Activated CD4-positive, alpha-beta memory T cell treated with anti-CD3 and anti-CD28 coated beads for 36 hours (primary cell): ENCODE measurements at regions of chr17 and their contacts with region 1.

Region 1: GRCh38 chr17:36534840-36535668 is at the starts of genes MYO19 and PIGW:
- DNase-seq: peak; percentile 91
- H3K4me3 Mint-ChIP-seq: peak within 1 kb of the TSS; percentile 97
- H3K27ac Mint-ChIP-seq: peak within 1 kb of the TSS; percentile 95
- H3K4me1 Mint-ChIP-seq: peaks cover 43% of the 10 kb centered on the region
- H3K27me3 Mint-ChIP-seq: no peaks in the 10 kb centered on the region
- total RNA-seq, gene MYO19: 106 to 112 TPM
- total RNA-seq, gene PIGW: 11.8 to 12.3 TPM

Region 2: DNA sequence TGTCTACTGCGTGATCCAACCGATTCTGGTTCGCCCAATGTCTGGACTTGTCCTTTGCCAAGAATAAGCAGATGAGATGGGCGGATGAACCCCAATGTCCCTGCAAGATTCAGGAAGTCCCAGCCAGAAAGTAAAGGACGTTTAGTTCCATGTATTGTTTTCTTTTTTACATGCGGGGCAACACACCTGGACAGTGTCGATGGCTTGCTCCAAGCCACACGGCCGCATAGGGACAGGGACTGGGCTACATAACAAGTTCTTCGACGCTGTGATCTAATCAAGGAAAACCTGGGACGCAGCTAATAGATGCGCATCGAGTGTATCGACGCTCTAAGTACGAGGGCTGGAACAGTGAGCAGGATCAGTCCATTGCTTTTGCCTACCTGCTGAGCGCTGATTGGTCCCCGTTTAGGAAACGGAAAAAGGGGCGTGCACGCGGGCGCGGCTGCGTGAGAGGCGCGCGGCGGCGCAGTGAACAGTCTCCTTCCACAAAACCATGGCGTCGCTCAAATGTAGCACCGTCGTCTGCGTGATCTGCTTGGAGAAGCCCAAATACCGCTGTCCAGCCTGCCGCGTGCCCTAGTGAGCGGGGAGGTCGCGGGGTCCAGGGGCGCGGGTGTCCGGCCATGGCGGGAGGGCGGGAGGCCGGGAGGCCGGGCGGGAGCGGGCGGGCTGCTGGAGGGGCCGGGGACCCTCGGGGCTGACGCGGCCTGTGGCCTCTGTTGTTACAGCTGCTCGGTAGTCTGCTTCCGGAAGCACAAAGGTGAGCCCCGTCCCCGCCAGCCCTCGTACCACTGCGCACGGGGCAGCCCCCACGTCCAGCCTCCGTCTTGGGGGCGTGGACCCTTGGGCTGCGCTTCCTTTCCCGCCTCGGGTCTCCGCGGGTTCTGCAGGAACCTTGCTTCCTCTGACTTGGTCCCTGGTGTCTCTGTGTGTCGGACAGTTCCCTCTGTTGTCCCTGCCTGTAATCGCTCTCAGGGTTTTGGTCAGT is 48.6 kb before region 1 on chr17 and contains the start of gene ZNHIT3:
- CTCF ChIA-PET with region 1: interaction called, 4 read pairs
- POLR2A ChIA-PET with region 1: interaction called, 5 read pairs
- intact Hi-C with region 1: loop called (anchors 2 kb)
- DNase-seq: peak; percentile 96
- H3K4me3 Mint-ChIP-seq: peak within 1 kb of the TSS; percentile 94
- H3K27ac Mint-ChIP-seq: peak within 1 kb of the TSS; percentile 93
- H3K4me1 Mint-ChIP-seq: peaks cover 48% of the 10 kb centered on the region
- H3K27me3 Mint-ChIP-seq: peaks cover 13% of the 10 kb centered on the region
- total RNA-seq, gene ZNHIT3: 41.6 to 45.2 TPM

Region 3: DNA sequence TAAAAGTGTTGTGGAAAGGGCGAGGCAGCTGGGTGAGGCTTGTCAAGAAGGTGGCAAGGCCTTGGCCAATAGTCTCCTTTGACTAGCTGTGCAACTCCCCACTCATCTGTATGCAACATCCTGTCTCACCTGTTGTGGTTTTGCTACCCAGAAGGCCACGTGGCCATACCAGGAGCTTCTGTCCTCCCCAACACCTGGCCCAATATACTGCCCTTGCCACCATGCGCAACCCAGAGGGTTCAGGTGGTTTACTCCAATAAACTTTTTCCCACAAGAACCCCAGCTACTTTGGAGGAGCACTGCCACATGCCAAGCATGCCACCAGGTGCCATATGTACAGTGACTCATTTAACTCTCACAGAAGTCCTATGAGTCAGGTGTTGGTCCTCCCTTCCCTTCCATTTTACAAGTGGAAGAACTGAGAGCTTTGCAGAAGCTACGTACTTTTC is 10.6 kb before region 1 on chr17:
- CTCF ChIA-PET with region 1: interaction called, 16 read pairs
- POLR2A ChIA-PET with region 1: interaction called, 21 read pairs
- intact Hi-C with region 1: no loop called
- DNase-seq: peak; percentile 27
- H3K4me3 Mint-ChIP-seq: no peak overlapping the region
- H3K27ac Mint-ChIP-seq: peak overlapping the region; percentile 78
- H3K4me1 Mint-ChIP-seq: peaks cover 28% of the 10 kb centered on the region
- H3K27me3 Mint-ChIP-seq: no peaks in the 10 kb centered on the region

Region 4: GRCh38 chr17:36545465-36546417 is 10.7 kb after region 1 on chr17:
- CTCF ChIA-PET with region 1: interaction called, 19 read pairs
- POLR2A ChIA-PET with region 1: interaction called, 59 read pairs
- intact Hi-C with region 1: loop called (anchors 1 kb)
- DNase-seq: peak; percentile 98
- H3K4me3 Mint-ChIP-seq: peak overlapping the region; percentile 90
- H3K27ac Mint-ChIP-seq: peak overlapping the region; percentile 98
- H3K4me1 Mint-ChIP-seq: peaks cover 40% of the 10 kb centered on the region
- H3K27me3 Mint-ChIP-seq: no peaks in the 10 kb centered on the region

Region 5: DNA sequence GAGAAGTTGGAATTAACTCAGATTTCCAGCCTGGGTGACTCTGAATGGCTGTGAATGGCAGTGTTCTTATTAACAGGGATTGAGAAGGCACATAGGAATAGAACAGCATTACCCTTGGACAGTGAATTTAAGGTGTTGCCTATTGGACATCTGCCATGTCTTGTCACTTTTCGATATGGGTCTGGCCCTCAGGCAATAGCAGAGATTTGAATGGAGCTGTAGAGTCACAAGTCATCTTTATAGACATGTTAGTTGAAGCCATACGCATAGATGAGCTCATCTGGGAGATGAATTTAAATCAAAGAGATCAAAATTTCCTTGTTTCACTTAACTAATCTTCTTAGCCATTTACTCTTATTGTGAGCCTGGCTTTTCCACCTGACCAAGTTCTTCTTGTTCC is 41.7 kb after region 1 on chr17:
- CTCF ChIA-PET with region 1: no interaction called
- POLR2A ChIA-PET with region 1: no interaction called
- intact Hi-C with region 1: no loop called
- DNase-seq: no peak
- H3K4me3 Mint-ChIP-seq: no peak overlapping the region
- H3K27ac Mint-ChIP-seq: no peak overlapping the region
- H3K4me1 Mint-ChIP-seq: peaks cover 7% of the 10 kb centered on the region
- H3K27me3 Mint-ChIP-seq: no peaks in the 10 kb centered on the region

Region 6: DNA sequence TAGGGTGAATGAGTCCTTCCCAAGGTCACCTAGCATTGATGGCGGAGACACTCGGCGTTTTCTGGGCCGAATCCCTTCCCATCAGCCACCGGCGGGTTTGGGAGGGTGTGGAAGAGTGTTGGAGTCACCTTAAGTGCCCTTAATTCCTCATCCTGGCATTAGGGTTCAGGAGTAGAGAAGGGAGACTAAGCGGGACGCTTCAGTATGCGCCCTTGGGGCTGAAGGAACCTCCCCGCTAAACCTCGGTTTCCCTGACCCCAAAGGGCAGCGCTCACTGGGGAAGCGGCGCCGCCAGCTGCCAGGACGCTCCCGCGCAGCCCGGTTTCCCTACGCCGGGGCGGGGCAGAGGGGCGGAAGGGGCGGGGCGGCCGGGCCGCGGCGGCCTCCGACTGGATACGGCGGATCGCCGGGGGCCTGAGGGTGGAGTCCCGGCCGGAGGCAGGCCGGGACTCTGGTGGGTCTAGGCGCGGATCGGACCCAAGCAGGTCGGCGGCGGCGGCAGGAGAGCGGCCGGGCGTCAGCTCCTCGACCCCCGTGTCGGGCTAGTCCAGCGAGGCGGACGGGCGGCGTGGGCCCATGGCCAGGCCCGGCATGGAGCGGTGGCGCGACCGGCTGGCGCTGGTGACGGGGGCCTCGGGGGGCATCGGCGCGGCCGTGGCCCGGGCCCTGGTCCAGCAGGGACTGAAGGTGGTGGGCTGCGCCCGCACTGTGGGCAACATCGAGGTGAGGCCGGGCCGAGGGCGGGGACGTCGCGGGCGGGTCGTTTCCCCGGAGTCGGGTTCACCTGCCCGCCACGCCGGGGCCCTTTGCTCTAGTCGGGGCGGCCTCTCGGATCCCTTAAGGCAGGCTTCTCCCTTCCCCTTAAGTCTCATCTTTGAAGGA is 56.6 kb after region 1 on chr17 and contains the start of gene DHRS11:
- CTCF ChIA-PET with region 1: no interaction called
- POLR2A ChIA-PET with region 1: interaction called, 8 read pairs
- intact Hi-C with region 1: loop called (anchors 2 kb)
- DNase-seq: peak; percentile 87
- H3K4me3 Mint-ChIP-seq: peak within 1 kb of the TSS; percentile 69
- H3K27ac Mint-ChIP-seq: peak within 1 kb of the TSS; percentile 49
- H3K4me1 Mint-ChIP-seq: peaks cover 28% of the 10 kb centered on the region
- H3K27me3 Mint-ChIP-seq: no peaks in the 10 kb centered on the region
- total RNA-seq, gene DHRS11: 10.2 to 10.5 TPM